ENCODE measurements at regions of chr7 and their contacts with region 1.

Region 1: DNA sequence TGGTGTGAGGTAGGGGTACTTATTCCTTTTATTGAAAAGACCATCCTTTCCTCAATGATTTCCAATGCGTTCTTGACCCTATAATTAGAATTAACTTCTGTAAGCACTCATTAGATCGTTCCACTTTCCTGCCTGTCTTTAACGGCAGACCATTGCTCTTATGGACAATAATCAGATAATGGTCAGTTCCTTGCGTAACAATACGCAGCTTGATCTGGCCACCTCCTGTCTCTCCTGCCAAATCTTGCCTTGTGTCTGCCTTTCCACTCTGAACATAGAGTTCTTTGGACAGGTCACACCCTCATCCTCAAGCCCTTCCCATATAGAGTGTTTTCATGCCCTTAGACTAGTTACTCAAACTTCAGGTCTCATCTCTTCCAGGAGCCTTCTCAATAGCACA is 2.4 kb upstream of the WIPI2 start:
- DNase-seq: no peak
- H3K4me3 ChIP-seq: no peak overlapping the region
- H3K4me3 Mint-ChIP-seq: no peak overlapping the region
- H3K27ac ChIP-seq: no peak overlapping the region
- H3K27ac Mint-ChIP-seq: peak overlapping the region in 1 of 7 donors; percentile 31
- H3K4me1 ChIP-seq: peaks cover 18 to 20% of the 10 kb centered on the region in 2 donors
- H3K4me1 Mint-ChIP-seq: peaks cover 20% of the 10 kb centered on the region
- H3K27me3 ChIP-seq: no peaks in the 10 kb centered on the region
- H3K27me3 Mint-ChIP-seq: peaks cover 0 to 6% (median 5%) of the 10 kb centered on the region in 3 donors
- CTCF ChIP-seq: no peak

Region 2: DNA sequence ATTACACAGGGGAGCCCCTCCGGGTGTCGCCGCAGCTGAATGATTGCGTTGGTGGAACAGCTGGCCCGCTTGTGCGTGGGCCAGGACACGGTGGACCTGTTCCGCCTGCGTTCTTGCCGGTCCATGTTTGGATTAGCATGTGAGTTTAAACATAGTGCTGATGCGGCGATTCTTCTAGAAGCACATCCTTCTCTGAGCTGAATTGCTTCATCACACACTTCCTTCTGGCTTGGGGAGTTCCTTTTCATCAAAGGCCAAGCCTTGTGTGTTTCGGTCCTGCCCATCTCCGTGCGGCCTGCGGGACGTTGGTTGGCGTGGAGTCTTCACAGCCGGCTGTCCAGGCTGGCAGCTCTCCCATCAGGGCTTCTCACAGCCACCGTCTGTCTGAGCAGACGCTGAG is 49.7 kb after region 1 on chr7:
- intact Hi-C with region 1: loop called in 1 of 2 experiments (anchors 5 kb)
- DNase-seq: peak; percentile 85 to 92 (median 90)
- H3K4me3 ChIP-seq: peak overlapping the region in 2 of 3 experiments; percentile 26 to 65
- H3K4me3 Mint-ChIP-seq: peak overlapping the region; percentile 74 to 88
- H3K27ac ChIP-seq: peak overlapping the region; percentile 85 to 88
- H3K27ac Mint-ChIP-seq: peak overlapping the region; percentile 92 to 98 (median 95)
- H3K4me1 ChIP-seq: peaks cover 54 to 69% of the 10 kb centered on the region in 2 donors
- H3K4me1 Mint-ChIP-seq: peaks cover 61% of the 10 kb centered on the region
- H3K27me3 ChIP-seq: peaks cover 0 to 3% of the 10 kb centered on the region in 2 donors
- H3K27me3 Mint-ChIP-seq: peaks cover 7 to 10% (median 10%) of the 10 kb centered on the region in 3 donors
- CTCF ChIP-seq: no peak

Measured in CD14-positive monocyte (primary cell).